ENCODE measurements at regions of chr14 and their contacts with region 1.

Region 1: GRCh38 chr14:95319312-95320021 is at the start of gene CLMN:
- DNase-seq: peak; percentile 52
- H3K4me3 ChIP-seq: peak within 1 kb of the TSS; percentile 78 to 85 (median 82)
- H3K27ac ChIP-seq: peak within 1 kb of the TSS; percentile 58
- H3K4me1 ChIP-seq: peaks cover 65% of the 10 kb centered on the region
- H3K27me3 ChIP-seq: no peaks in the 10 kb centered on the region
- CTCF ChIP-seq: no peak
- total RNA-seq, gene CLMN: 12.2 to 64.3 TPM

Region 2: GRCh38 chr14:95098984-95099599 is 220.4 kb before region 1 on chr14:
- CTCF ChIA-PET with region 1: no interaction called
- dilution Hi-C with region 1: no loop called
- in situ Hi-C with region 1: no loop called
- intact Hi-C with region 1: no loop called
- DNase-seq: peak; percentile 49
- H3K4me3 ChIP-seq: no peak overlapping the region
- H3K27ac ChIP-seq: no peak overlapping the region
- H3K4me1 ChIP-seq: no peaks in the 10 kb centered on the region
- H3K27me3 ChIP-seq: no peaks in the 10 kb centered on the region
- CTCF ChIP-seq: peak; percentile 70 to 89

Region 3: GRCh38 chr14:95413289-95414215 is 94.1 kb after region 1 on chr14:
- CTCF ChIA-PET with region 1: no interaction called
- dilution Hi-C with region 1: no loop called
- in situ Hi-C with region 1: no loop called
- intact Hi-C with region 1: loop called (anchors 5 kb)
- DNase-seq: no peak
- H3K4me3 ChIP-seq: no peak overlapping the region
- H3K27ac ChIP-seq: no peak overlapping the region
- H3K4me1 ChIP-seq: no peaks in the 10 kb centered on the region
- H3K27me3 ChIP-seq: no peaks in the 10 kb centered on the region
- CTCF ChIP-seq: no peak

Region 4: DNA sequence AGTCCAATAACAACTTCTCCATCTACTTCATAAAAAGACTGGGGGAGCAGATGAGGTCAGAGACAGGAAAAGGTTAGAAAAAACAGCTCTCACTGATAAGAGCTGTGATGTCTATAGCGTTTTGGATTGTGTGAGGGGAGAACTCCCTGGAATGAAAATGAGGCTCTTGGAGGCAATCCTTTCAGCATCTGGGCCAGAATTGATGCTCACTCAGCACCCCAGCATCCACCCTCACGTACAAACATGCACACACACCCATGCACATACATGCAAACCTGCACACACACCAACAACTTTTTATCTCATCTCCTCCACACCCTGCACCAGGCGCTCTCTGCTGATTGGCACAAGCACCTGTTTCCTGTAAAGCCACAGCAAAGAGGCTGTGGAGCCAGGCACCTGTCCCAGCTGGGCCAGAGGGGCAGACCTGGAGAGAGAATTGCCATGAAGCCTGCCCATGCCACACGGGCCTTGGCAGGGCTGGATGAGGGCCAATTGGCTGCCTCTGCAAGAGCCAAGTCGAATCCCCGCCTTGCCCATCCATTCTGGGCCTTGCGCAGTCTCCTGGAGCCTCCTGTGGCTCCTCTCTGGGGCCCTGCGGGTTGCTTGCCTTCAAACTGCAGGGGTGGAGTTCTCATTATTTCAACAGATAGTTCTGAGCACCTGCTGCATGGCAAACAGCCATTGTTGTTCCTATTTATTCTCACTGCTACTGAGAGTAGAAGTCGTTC is 143.9 kb after region 1 on chr14:
- CTCF ChIA-PET with region 1: no interaction called
- dilution Hi-C with region 1: no loop called
- in situ Hi-C with region 1: no loop called
- intact Hi-C with region 1: no loop called
- DNase-seq: no peak
- H3K4me3 ChIP-seq: no peak overlapping the region
- H3K27ac ChIP-seq: no peak overlapping the region
- H3K4me1 ChIP-seq: no peaks in the 10 kb centered on the region
- H3K27me3 ChIP-seq: no peaks in the 10 kb centered on the region
- CTCF ChIP-seq: no peak

Measured in mammary epithelial cell (primary cell).